ENCODE measurements at regions of chr19 and their contacts with region 1.

Region 1: DNA sequence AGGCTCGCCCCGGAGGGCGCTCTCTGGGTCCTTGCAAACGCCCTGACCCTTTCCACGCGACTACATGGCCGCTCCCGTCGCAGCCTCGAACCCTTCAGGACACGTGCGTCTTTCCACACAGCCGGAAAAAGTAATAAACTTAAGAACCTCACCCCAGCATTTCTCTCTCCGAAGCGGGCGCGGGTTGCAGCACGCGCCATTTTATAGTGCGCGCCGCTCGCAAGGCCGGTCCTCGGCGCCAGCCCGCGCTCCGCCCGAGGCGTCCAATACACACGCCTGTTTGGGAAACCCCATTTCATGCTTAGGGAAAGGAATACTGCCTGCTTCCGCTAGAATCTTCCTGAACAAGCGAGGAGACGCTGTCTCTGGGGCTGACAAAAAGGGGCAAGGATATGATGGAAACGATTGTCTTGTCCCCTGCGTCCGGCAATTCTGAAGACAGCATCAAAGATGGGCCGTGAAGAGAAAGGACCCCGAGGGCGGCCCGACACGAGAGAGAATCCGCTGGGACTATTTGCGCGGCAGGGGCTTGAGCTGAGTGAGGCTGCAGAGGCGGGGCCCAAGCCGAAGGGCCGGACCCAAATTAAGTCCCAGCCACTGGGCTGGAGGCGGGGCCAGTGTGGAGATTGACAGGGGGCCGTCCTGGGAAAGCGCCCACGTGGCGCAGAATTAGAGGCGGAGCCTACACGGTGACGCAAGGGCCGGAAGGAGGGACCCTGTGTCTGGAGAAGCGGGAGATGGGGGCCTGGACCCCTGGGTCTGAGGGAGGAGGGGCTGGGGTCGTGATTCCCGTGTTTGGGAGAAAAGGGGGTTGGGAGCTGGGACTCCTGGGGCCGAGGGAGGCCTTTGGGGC is 14.4 kb downstream of the ACP4 start:
- DNase-seq: peak; percentile 96 to 98
- ATAC-seq: peak; percentile 98
- H3K4me3 ChIP-seq: peak overlapping the region; percentile 82 to 100 (median 84)
- H3K27ac ChIP-seq: peak overlapping the region; percentile 92 to 100 (median 94)
- H3K4me1 ChIP-seq: peaks cover 15 to 23% of the 10 kb centered on the region in 2 donors
- H3K27me3 ChIP-seq: no peaks in the 10 kb centered on the region
- CTCF ChIP-seq: peak in 1 of 5 experiments; percentile 16
- POLR2A ChIP-seq: peak; percentile 56 to 60

Region 2: DNA sequence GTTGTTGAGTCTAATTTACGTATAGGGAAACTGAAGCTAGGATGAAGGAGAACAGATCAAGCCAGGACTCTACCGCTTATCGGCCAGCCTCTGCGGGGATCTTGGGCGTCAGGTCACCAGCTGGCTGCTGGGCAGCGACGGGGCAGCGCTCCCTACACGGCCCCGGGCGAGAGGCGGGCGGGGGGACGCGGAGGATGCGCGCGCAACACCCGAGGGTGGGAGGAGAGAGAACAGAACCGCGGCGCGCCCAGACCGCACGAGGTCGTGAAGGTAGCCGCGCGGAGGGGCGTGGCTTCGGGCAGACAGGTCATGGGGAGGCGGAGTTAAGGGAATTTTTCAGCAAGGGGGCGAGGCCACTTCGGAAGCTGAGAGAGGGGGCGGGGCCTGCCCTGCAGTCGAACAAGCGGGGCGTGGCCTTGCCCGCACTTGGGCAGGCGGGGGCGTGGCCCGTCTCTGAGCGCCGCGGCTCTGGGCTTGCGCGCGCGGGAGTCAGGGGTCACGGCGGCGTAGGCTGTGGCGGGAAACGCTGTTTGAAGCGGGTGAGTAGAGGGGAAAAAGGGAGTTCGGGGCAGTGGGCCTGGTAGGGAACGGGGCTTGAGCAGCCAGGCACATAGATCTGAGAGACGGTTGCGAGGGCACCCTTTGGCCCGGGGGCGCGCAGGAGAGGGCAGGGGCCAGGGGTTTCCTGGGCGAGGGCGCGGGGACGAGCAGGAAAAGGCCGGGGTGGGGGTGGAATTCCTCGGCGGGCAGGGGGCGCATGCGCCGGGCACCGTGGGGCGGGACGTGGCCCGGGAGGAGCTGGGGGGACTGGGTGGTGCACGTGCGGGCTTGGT is 420.6 kb before region 1 on chr19 and contains the start of gene POLD1:
- in situ Hi-C with region 1: no loop called
- intact Hi-C with region 1: loop called (anchors 5 kb)
- DNase-seq: peak; percentile 95 to 97
- ATAC-seq: peak; percentile 93 to 94
- H3K4me3 ChIP-seq: peak within 1 kb of the TSS; percentile 63 to 83 (median 76)
- H3K27ac ChIP-seq: peak within 1 kb of the TSS; percentile 71 to 95 (median 84)
- H3K4me1 ChIP-seq: peaks cover 8 to 14% of the 10 kb centered on the region in 2 donors
- H3K27me3 ChIP-seq: no peaks in the 10 kb centered on the region
- CTCF ChIP-seq: no peak
- POLR2A ChIP-seq: peak in 1 of 2 donors; percentile 32
- total RNA-seq, gene POLD1: 4.0 to 18.3 (median 6.0) TPM

Region 3: DNA sequence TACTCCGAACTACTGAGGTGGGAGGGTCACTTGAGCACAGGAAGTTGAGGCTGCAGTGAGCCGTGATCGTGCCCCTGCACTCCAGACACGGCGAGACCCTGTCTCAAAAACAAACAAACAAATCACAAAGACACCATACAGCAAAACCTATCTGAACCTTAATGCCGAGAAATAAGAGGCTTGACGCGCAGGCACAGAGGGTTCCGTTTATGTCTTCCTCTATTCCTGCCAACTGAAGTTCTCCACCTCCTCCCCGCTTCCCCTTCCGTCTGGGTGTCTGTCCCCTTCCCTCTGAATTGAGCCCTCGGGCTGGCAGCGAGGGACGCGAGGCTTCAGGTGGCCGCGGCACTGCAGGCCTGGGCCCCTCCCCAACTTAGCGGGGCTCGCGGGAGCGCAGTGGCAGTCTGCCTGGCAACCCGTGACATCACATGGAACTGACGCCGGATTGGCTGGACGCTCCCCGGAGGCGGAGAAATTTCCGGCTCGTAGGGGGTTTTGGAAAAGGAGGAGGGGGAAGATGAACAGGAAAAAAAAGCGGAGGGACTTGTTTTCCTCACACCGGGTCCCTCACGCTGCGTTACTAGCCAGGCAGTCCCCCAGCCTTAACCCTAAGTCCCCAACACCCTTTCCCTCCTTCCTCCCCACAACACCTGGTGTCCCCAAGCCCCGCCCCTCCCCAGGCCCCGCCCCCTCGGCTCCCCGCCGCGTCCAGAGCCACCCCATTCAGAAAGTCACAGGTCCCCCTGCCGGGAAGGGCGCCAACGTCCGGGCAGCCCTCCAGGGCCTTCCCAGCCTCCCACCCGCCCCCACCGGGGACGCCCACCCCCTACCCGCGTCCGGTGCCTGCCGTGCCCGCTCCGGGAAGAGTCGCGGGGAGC is 373.1 kb before region 1 on chr19:
- in situ Hi-C with region 1: no loop called
- intact Hi-C with region 1: loop called (anchors 10 kb)
- DNase-seq: peak; percentile 73 to 81
- ATAC-seq: peak; percentile 77 to 88
- H3K4me3 ChIP-seq: peak overlapping the region; percentile 66 to 94 (median 78)
- H3K27ac ChIP-seq: peak overlapping the region; percentile 85 to 94 (median 88)
- H3K4me1 ChIP-seq: peaks cover 12 to 22% of the 10 kb centered on the region in 2 donors
- H3K27me3 ChIP-seq: peaks cover 4 to 14% (median 10%) of the 10 kb centered on the region in 3 donors
- CTCF ChIP-seq: no peak
- POLR2A ChIP-seq: peak; percentile 25 to 33

Region 4: DNA sequence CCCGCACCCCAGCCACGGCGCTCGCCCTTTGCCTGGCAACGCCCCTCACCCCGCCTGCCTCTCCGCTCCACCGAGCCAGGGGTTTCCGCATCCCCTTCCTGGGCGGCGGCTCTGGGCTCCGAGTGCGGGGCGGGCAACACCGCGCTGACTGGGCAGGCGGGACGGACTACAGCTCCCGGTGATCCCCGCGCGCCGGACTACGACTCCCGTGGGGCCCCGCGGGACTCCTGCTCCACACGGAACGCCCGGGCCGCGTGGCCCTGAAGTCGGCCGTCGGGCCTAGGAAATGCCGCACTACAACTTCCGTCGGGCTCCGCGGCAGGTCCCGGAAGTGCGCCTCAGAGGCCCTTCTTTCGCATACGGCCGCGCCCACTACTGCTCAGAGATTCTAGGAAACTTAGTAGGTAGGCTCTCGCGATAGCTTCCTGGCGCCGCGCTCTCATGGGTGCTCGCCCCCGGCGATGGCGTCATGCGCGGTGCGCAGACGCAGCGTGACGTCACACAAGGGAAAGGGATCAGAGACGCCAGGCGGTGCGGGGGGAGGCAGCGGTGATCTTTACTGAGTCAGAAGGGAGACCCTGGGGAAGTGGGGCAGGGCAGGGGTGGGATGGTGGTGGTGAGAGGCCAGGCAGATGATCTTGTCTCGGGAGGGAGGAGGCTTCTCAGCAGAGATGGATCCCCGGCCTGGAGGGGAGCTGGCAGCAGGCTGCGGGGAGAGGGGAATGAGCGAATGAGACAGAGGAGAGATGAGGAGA is 293.4 kb before region 1 on chr19 and contains the start of gene JOSD2:
- in situ Hi-C with region 1: no loop called
- intact Hi-C with region 1: loop called (anchors 10 kb)
- DNase-seq: peak; percentile 95 to 98
- ATAC-seq: peak; percentile 92 to 94
- H3K4me3 ChIP-seq: peak within 1 kb of the TSS; percentile 87 to 92 (median 88)
- H3K27ac ChIP-seq: peak within 1 kb of the TSS; percentile 79 to 89 (median 85)
- H3K4me1 ChIP-seq: peaks cover 7 to 13% of the 10 kb centered on the region in 2 donors
- H3K27me3 ChIP-seq: peaks cover 0 to 4% (median 0%) of the 10 kb centered on the region in 3 donors
- CTCF ChIP-seq: peak in 2 of 5 experiments; percentile 21 to 22
- POLR2A ChIP-seq: peak; percentile 68 to 81
- total RNA-seq, gene JOSD2: 22.1 to 36.9 (median 27.8) TPM

Region 5: DNA sequence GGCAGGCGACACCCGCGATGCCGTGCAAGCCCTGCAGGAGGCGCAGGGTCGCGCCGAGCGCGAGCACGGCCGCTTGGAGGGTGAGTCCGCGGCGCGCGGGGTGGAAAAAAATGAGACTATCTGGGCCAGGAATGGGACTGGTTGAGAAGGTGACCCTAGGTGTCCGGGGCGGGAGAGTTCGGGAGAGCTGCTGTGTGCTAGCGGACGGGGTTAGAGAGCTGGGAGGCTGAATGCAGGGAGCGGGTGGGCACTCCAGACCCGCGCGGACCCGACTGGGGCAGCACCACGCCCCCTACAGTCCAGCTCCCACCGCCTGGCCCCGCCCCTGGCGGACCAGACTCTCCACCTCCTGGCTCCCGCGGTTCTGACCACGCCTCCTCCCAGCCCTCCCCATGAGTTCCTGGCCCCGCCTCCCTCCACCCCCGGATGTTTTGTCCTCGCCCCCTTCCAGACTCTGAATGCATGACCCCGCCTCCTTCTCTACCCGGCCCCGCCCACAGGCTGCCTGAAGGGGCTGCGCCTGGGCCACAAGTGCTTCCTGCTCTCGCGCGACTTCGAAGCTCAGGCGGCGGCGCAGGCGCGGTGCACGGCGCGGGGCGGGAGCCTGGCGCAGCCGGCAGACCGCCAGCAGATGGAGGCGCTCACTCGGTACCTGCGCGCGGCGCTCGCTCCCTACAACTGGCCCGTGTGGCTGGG is 80.0 kb before region 1 on chr19:
- in situ Hi-C with region 1: no loop called
- intact Hi-C with region 1: loop called (anchors 1 kb)
- DNase-seq: peak; percentile 85 to 92
- ATAC-seq: peak; percentile 86 to 94
- H3K4me3 ChIP-seq: peak overlapping the region; percentile 51 to 58 (median 56)
- H3K27ac ChIP-seq: peak overlapping the region; percentile 16 to 49 (median 28)
- H3K4me1 ChIP-seq: peaks cover 0 to 5% of the 10 kb centered on the region in 2 donors
- H3K27me3 ChIP-seq: peaks cover 19 to 52% (median 45%) of the 10 kb centered on the region in 3 donors
- CTCF ChIP-seq: peak; percentile 20 to 67 (median 44)
- POLR2A ChIP-seq: peak; percentile 14 to 32

Region 6: GRCh38 chr19:50882183-50882582 is 77.5 kb after region 1 on chr19:
- in situ Hi-C with region 1: no loop called
- intact Hi-C with region 1: no loop called
- DNase-seq: no peak
- ATAC-seq: no peak
- H3K4me3 ChIP-seq: no peak overlapping the region
- H3K27ac ChIP-seq: no peak overlapping the region
- H3K4me1 ChIP-seq: no peaks in the 10 kb centered on the region
- H3K27me3 ChIP-seq: peaks cover 0 to 4% (median 0%) of the 10 kb centered on the region in 3 donors
- CTCF ChIP-seq: no peak
- POLR2A ChIP-seq: no peak

Region 7: DNA sequence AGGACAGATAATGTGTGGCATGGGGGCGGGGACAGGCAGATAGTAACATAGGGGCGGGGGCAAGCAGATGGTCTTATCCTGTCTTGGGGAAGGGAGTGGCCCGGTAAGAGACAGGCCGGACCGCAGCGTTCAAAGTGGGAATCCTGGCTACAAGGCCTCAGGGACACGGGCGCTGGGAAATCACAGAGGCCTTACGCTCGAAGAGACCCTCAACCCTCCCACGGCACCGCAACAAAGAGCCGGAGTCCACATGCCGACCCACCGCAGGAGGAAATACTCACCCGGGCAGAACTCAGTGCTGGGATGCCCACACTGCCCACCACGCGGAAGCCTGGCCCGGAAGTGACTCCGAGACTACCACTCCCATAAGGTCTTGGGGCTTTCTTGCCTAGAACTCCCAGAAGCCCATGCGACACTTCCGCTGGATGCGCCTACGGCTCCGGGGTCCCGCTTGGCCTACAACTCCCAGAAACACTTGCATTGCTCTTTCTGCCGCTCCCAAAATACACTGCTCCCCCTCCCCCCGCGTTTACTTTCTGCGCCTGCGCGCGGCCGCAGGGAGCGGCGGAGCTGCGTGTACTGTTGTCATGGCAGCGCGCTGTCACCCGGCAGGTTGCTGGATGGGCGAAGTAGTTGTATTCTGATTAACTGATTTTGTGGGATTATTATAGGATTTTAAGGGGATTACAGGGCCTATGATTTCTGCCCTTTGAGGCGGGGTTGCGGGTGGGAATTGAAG is 303.6 kb after region 1 on chr19 and contains the start of gene CTU1:
- in situ Hi-C with region 1: no loop called
- intact Hi-C with region 1: loop called (anchors 10 kb)
- DNase-seq: peak; percentile 98 to 99
- ATAC-seq: peak; percentile 100
- H3K4me3 ChIP-seq: peak within 1 kb of the TSS; percentile 65 to 87 (median 76)
- H3K27ac ChIP-seq: peak within 1 kb of the TSS; percentile 68 to 77 (median 74)
- H3K4me1 ChIP-seq: peaks cover 8 to 14% of the 10 kb centered on the region in 2 donors
- H3K27me3 ChIP-seq: no peaks in the 10 kb centered on the region
- CTCF ChIP-seq: peak in 2 of 5 experiments; percentile 24 to 26
- POLR2A ChIP-seq: peak; percentile 34 to 63
- total RNA-seq, gene CTU1: 5.8 to 11.9 (median 9.3) TPM